Activated naive CD4-positive, alpha-beta T cell treated with anti-CD3 and anti-CD28 coated beads for 36 hours (primary cell): ENCODE measurements at regions of chr6 and their contacts with region 1.

Region 1: DNA sequence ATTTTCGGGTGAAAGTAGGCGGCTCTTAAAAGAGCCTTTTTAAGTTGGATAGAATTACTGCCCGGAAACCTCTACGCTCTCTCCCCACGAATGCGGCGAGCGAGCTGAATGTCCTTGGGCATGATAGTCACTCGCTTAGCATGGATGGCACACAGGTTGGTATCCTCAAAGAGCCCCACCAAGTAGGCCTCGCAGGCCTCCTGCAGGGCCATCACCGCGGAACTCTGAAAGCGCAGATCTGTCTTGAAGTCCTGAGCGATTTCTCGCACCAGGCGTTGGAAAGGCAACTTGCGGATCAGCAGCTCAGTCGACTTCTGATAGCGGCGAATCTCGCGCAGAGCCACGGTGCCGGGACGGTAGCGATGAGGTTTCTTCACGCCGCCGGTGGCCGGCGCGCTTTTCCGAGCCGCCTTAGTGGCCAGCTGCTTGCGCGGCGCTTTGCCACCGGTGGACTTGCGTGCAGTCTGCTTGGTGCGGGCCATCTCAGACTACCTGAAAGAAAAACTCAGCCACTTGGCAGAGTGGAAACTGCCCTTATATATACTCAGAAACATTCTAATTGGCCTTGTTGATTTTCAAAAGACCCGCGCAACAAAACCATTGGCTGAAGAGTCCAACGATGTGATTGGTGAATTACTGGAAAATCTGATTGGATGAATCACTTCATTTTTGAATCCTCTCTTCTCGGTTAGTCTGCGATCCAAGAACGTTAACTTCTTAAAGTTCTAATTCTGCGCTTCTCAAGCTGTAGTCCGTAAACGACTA is 93.9 kb upstream of the BTN3A2 start:
- DNase-seq: peak; percentile 92
- H3K4me3 Mint-ChIP-seq: no peak overlapping the region
- H3K27ac Mint-ChIP-seq: no peak overlapping the region
- H3K4me1 Mint-ChIP-seq: peaks cover 9% of the 10 kb centered on the region
- H3K27me3 Mint-ChIP-seq: peaks cover 5% of the 10 kb centered on the region

Region 2: DNA sequence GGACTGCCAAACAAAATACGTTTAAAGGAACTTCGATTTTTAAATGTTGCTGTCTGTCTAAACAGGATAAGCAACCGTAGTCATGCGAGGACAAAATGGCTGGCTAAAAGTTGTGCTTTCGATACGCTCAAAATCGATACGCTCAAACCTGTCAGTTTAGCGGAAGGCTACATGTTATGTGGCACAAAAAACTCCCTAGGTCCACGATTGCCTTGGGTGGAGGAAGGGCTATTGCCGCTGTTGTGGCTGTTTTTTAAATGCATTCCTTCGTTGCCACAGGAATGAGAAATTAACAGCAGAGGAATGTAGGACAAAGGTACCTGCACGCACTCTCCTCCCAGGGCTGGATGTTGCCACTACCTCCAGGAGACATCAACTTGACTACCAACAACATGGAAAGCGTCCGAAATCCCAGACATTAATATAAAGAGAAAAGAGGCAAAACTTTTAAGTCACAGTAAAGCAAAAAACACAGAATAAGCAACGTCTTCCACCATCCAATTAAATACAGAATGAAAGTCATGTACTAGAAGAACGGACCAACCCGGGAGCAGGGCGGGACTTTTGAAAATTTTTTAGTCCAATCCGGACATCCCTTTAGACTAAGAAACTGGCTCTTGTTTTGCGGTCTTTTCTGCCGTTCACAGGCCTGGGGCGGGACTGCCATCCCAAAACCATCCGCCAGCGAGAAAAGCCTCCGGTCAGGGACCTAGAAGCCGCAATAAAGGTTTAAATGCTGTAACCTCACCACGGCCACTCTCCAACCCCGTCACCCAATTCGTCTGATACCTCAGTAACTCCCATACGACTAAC is 216.0 kb before region 1 on chr6:
- CTCF ChIA-PET with region 1: no interaction called
- intact Hi-C with region 1: loop called (anchors 2 kb)
- DNase-seq: peak; percentile 95
- H3K4me3 Mint-ChIP-seq: peak overlapping the region; percentile 97
- H3K27ac Mint-ChIP-seq: peak overlapping the region; percentile 100
- H3K4me1 Mint-ChIP-seq: peaks cover 18% of the 10 kb centered on the region
- H3K27me3 Mint-ChIP-seq: peaks cover 11% of the 10 kb centered on the region

Region 3: DNA sequence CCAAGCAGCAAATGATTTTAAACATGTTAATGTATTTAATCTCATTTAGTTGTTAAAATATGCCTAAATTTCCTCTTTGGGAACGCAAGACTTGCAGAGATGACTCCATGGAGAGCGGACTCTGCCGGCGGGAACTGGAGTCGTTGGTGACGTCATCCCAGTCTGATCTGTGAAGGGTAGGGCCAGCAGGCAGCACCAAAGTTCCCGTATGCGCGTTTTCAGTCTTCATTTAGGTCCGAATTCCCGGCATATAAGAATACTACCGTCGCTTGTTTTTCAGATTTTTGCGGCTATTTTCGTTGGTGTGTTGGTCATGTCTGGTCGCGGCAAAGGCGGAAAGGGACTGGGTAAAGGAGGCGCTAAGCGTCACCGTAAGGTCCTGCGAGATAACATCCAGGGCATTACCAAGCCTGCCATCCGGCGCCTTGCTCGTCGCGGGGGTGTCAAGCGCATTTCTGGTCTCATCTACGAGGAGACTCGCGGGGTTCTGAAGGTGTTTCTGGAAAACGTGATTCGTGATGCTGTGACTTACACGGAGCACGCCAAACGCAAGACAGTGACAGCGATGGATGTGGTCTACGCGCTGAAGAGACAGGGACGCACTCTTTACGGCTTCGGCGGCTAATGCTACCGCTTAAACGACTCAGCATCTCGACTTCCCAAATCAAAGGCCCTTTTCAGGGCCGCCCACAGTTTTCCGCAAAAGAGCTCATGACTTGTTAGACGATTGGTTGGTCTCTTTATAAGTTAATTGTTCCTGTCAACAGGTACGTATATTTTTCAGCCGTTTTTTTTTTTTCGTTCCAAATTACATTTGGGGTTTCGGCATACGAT is 66.5 kb before region 1 on chr6:
- CTCF ChIA-PET with region 1: no interaction called
- intact Hi-C with region 1: loop called (anchors 2 kb)
- DNase-seq: peak; percentile 94
- H3K4me3 Mint-ChIP-seq: no peak overlapping the region
- H3K27ac Mint-ChIP-seq: no peak overlapping the region
- H3K4me1 Mint-ChIP-seq: peaks cover 20% of the 10 kb centered on the region
- H3K27me3 Mint-ChIP-seq: no peaks in the 10 kb centered on the region

Region 4: DNA sequence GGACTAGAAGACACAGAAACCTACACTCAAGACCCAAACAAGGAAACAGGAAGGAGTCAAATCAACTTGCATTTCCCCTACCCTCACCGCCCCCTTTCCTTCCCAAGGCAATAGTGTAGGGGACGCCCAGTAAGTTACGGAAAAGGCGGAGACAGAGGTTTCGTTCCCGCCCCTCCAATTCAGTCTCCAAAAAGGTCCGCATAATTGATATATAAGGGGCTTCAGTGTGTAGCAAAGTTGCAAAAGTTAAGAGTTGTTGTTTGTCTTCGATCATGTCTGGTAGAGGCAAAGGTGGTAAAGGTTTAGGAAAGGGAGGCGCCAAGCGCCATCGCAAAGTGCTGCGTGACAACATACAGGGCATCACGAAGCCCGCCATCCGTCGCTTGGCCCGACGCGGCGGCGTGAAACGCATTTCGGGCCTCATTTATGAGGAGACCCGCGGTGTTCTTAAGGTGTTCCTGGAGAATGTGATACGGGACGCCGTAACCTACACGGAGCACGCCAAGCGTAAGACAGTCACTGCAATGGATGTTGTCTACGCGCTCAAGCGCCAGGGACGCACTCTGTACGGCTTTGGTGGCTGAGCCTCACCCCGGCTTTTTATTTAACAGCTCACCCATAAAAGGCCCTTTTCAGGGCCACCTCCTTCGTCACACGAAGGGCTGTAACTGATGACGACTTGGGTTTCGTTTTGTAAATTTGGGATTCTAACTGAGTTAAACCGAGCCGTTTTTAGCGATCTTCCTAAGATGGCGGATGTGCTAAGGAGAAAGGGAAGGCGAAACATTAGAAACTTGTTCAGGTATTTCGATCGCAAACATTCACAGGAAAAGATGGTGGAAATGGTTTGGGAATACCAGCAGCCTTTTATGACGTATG is 30.7 kb before region 1 on chr6:
- CTCF ChIA-PET with region 1: no interaction called
- intact Hi-C with region 1: loop called (anchors 1 kb)
- DNase-seq: peak; percentile 89
- H3K4me3 Mint-ChIP-seq: peak overlapping the region; percentile 77
- H3K27ac Mint-ChIP-seq: peak overlapping the region; percentile 93
- H3K4me1 Mint-ChIP-seq: peaks cover 21% of the 10 kb centered on the region
- H3K27me3 Mint-ChIP-seq: no peaks in the 10 kb centered on the region

Region 5: GRCh38 chr6:26258200-26258977 is 12.7 kb before region 1 on chr6:
- CTCF ChIA-PET with region 1: interaction called, 40 read pairs
- intact Hi-C with region 1: no loop called
- DNase-seq: no peak
- H3K4me3 Mint-ChIP-seq: no peak overlapping the region
- H3K27ac Mint-ChIP-seq: no peak overlapping the region
- H3K4me1 Mint-ChIP-seq: peaks cover under 1% of the 10 kb centered on the region
- H3K27me3 Mint-ChIP-seq: peaks cover 3% of the 10 kb centered on the region

Region 6: GRCh38 chr6:26296857-26297648 is 26.0 kb after region 1 on chr6:
- CTCF ChIA-PET with region 1: no interaction called
- intact Hi-C with region 1: no loop called
- DNase-seq: no peak
- H3K4me3 Mint-ChIP-seq: no peak overlapping the region
- H3K27ac Mint-ChIP-seq: no peak overlapping the region
- H3K4me1 Mint-ChIP-seq: peaks cover 21% of the 10 kb centered on the region
- H3K27me3 Mint-ChIP-seq: no peaks in the 10 kb centered on the region

Region 7: GRCh38 chr6:26342106-26343004 is 71.3 kb after region 1 on chr6:
- CTCF ChIA-PET with region 1: no interaction called
- intact Hi-C with region 1: no loop called
- DNase-seq: peak; percentile 53
- H3K4me3 Mint-ChIP-seq: peak overlapping the region; percentile 77
- H3K27ac Mint-ChIP-seq: peak overlapping the region; percentile 39
- H3K4me1 Mint-ChIP-seq: peaks cover 4% of the 10 kb centered on the region
- H3K27me3 Mint-ChIP-seq: peaks cover 2% of the 10 kb centered on the region

Region 8: DNA sequence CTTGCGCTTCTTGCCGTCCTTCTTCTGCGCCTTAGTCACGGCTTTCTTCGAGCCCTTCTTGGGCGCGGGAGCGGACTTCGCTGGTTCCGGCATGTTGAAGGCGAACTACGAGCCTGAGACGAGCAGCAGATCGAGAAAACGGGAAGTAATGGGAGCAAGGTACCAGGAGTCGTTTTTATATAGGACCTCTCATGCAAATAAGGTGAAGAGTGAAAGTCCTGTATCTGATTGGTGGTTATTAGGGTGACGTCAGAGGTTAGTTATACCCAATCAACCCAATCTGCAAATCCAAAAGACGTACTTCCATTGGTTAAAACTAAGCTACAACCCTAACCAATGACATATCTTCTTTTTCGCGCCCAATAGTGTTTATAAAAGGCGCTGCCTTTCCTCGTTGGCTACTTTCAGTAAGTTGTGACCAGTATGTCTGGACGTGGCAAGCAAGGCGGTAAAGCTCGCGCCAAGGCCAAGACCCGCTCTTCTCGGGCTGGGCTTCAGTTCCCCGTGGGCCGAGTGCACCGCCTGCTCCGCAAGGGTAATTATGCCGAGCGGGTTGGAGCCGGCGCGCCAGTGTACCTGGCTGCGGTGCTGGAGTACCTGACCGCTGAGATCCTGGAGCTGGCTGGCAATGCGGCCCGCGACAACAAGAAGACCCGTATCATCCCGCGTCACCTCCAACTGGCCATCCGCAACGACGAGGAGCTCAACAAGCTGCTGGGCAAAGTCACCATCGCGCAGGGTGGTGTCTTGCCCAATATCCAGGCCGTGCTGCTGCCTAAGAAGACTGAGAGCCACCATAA is 875.8 kb after region 1 on chr6:
- CTCF ChIA-PET with region 1: no interaction called
- intact Hi-C with region 1: loop called (anchors 2 kb)
- DNase-seq: peak; percentile 87
- H3K4me3 Mint-ChIP-seq: no peak overlapping the region
- H3K27ac Mint-ChIP-seq: no peak overlapping the region
- H3K4me1 Mint-ChIP-seq: peaks cover 11% of the 10 kb centered on the region
- H3K27me3 Mint-ChIP-seq: no peaks in the 10 kb centered on the region